Dorsolateral prefrontal cortex (tissue), 120 donors: ENCODE measurements at regions of chr6 and their contacts with region 1.

Region 1: GRCh38 chr6:159134701-159135364 is 34.4 kb upstream of the FNDC1 start:
- DNase-seq: peak; percentile 48 to 86 (median 72)
- H3K4me3 ChIP-seq: peak overlapping the region in 1 of 59 donors; percentile 5
- H3K27ac ChIP-seq: no peak overlapping the region
- H3K27me3 ChIP-seq: peaks cover 0 to 9% (median 0%) of the 10 kb centered on the region in 45 donors
- CTCF ChIP-seq: peak; percentile 84 to 100 (median 97)

Region 2: GRCh38 chr6:158704181-158704822 is 430.5 kb before region 1 on chr6:
- intact Hi-C with region 1: loop called (anchors 5 to 10 kb)
- DNase-seq: peak; percentile 47 to 85 (median 62)
- H3K4me3 ChIP-seq: peak overlapping the region; percentile 7 to 73 (median 53)
- H3K27ac ChIP-seq: peak overlapping the region in 5 of 59 donors; percentile 43 to 72 (median 69)
- H3K27me3 ChIP-seq: no peaks in the 10 kb centered on the region
- CTCF ChIP-seq: peak; percentile 88 to 100 (median 98)

Region 3: DNA sequence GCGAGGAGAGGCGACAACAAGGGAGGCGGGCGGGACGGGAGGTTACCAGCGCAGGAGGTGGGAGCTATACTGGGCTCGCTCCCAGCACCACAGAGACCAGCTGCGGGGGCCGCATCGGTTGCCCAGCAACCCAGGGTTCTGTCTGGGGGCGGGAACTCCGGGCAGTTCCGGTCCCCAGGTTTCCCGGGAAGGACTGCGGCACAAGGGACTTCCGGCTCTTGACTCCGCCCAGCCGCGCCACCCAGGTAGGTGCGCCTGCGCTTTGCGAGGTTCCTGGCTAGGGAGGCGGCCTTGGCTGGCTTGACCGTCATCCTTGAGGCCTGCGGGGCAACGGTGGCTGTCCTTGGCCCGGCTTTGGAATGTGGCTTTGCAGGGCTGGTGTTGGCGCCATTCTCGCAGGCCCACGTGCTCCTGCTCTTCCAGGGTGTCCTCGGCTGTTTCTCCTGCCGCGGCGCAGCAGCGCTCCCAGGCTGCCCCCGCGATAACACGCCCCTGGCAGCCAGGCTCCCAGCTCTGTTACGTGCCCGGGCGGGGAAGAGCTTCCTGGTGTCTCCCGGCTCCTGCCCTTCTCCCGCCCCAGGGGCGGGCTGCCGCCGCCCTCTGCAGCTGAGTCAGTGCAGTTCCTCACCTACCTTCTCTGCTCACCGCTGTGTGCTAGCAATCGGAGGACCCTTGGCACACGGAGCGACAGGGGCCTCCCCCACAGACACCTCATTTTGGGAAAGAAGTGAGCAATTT is 135.0 kb before region 1 on chr6 and contains the start of gene RSPH3:
- intact Hi-C with region 1: loop called in 1 of 2 experiments (anchors 10 kb)
- DNase-seq: peak; percentile 75 to 97 (median 92)
- H3K4me3 ChIP-seq: peak within 1 kb of the TSS; percentile 57 to 98 (median 82)
- H3K27ac ChIP-seq: peak within 1 kb of the TSS in 58 of 59 donors; percentile 22 to 94 (median 80)
- H3K27me3 ChIP-seq: no peaks in the 10 kb centered on the region
- CTCF ChIP-seq: peak in 49 of 56 donors; percentile 2 to 63 (median 39)
- total RNA-seq, gene RSPH3: 8.3 to 24.5 (median 16.0) TPM

Region 4: GRCh38 chr6:159042003-159042825 is 92.6 kb before region 1 on chr6:
- intact Hi-C with region 1: loop called (anchors 2 to 5 kb)
- DNase-seq: peak in 6 of 10 donors; percentile 35 to 74 (median 50)
- H3K4me3 ChIP-seq: peak overlapping the region in 38 of 59 donors; percentile 0 to 54 (median 28)
- H3K27ac ChIP-seq: peak overlapping the region in 13 of 59 donors; percentile 9 to 65 (median 32)
- H3K27me3 ChIP-seq: no peaks in the 10 kb centered on the region
- CTCF ChIP-seq: peak; percentile 67 to 97 (median 91)